ENCODE measurements at regions of chr3 and their contacts with region 1.

Region 1: GRCh38 chr3:32018757-32019564 is 37.4 kb downstream of the ZNF860 start:
- DNase-seq: peak; percentile 53
- ATAC-seq: peak; percentile 53
- H3K4me3 ChIP-seq: no peak overlapping the region
- H3K4me3 Mint-ChIP-seq: no peak overlapping the region
- H3K27ac ChIP-seq: no peak overlapping the region
- H3K27ac Mint-ChIP-seq: no peak overlapping the region
- H3K4me1 ChIP-seq: peaks cover 7 to 10% of the 10 kb centered on the region in 2 donors
- H3K4me1 Mint-ChIP-seq: peaks cover 13% of the 10 kb centered on the region
- H3K27me3 ChIP-seq: no peaks in the 10 kb centered on the region
- H3K27me3 Mint-ChIP-seq: no peaks in the 10 kb centered on the region
- CTCF ChIP-seq: peak; percentile 81

Region 2: GRCh38 chr3:31880020-31880419 is 138.9 kb before region 1 on chr3:
- CTCF ChIA-PET with region 1: interaction called, 13 read pairs
- POLR2A ChIA-PET with region 1: no interaction called
- intact Hi-C with region 1: no loop called
- DNase-seq: peak; percentile 63
- ATAC-seq: peak; percentile 65
- H3K4me3 ChIP-seq: no peak overlapping the region
- H3K4me3 Mint-ChIP-seq: no peak overlapping the region
- H3K27ac ChIP-seq: peak overlapping the region in 1 of 2 donors; percentile 53
- H3K27ac Mint-ChIP-seq: peak overlapping the region; percentile 87
- H3K4me1 ChIP-seq: peaks cover 42 to 46% of the 10 kb centered on the region in 2 donors
- H3K4me1 Mint-ChIP-seq: peaks cover 79% of the 10 kb centered on the region
- H3K27me3 ChIP-seq: no peaks in the 10 kb centered on the region
- H3K27me3 Mint-ChIP-seq: no peaks in the 10 kb centered on the region
- CTCF ChIP-seq: peak; percentile 23

Region 3: DNA sequence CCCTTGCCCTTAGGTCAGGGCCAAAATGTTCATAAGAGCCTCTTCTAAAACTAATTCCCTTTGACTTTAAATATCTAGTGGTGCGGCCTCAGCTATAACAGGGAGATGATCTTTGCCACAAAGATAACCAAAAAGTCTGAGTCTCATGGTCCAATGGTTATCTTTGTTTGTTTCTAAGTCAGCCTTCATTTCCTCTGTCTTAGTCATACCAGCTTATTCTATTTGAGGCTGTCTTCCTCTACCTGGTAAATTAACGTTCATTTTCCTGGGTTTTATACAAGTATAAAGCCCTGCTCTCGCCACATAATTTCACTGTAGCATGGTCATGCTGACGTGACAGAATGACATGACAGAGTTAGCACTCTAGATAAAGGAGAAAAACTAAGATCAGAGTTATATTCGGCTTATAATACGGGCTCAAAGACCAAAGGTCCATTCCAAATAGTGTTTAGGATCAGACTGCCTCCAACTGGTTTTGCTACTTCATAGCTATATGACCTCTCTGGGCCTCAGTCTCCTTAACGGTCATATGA is 19.0 kb before region 1 on chr3:
- CTCF ChIA-PET with region 1: interaction called, 19 read pairs
- POLR2A ChIA-PET with region 1: no interaction called
- intact Hi-C with region 1: no loop called
- DNase-seq: peak; percentile 27
- ATAC-seq: peak; percentile 88
- H3K4me3 ChIP-seq: peak overlapping the region in 1 of 5 experiments; percentile 1
- H3K4me3 Mint-ChIP-seq: peak overlapping the region; percentile 83
- H3K27ac ChIP-seq: peak overlapping the region; percentile 59 to 85
- H3K27ac Mint-ChIP-seq: peak overlapping the region; percentile 98
- H3K4me1 ChIP-seq: peaks cover 39% of the 10 kb centered on the region in 2 donors
- H3K4me1 Mint-ChIP-seq: peaks cover 66% of the 10 kb centered on the region
- H3K27me3 ChIP-seq: no peaks in the 10 kb centered on the region
- H3K27me3 Mint-ChIP-seq: no peaks in the 10 kb centered on the region
- CTCF ChIP-seq: no peak

Measured in B cell (primary cell).